ENCODE measurements at regions of chr5 and their contacts with region 1.

Region 1: DNA sequence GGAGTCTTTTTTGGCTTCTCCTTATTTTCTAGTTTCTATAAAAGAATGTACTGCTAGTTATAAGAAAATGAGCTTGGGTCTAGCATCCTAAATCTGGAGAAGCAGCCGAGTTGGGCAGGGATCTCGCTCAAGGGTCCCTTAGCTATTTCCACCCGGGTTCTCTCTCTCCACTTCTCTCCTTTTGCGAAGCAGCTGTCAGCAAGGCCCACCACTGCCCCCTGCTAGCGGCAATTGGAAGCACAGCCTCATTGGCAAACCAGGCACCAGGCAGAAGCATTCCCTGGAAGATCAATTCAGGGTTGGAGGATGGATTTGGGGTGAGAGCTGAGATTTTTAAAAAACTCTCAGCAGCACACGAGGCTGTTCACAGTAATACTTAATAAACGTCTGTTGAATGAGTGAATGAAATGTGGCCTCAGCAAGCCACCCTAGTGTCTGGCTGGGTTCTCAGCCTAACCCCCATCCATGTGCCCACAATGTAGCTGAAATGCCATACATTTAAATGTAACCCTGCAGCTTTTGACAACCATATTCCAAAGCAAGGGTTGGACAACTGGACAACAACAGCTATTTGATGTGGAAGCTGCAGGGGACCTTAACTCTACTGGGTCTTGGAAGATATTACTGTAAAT is 34.6 kb upstream of the TNIP1 start:
- DNase-seq: peak; percentile 70
- ATAC-seq: peak; percentile 80
- H3K4me3 Mint-ChIP-seq: no peak overlapping the region
- H3K27ac Mint-ChIP-seq: peak overlapping the region; percentile 12
- H3K4me1 Mint-ChIP-seq: peaks cover 26% of the 10 kb centered on the region
- H3K27me3 Mint-ChIP-seq: no peaks in the 10 kb centered on the region
- CTCF ChIP-seq: peak; percentile 78

Region 2: GRCh38 chr5:150372639-150373038 is 742.8 kb before region 1 on chr5:
- CTCF ChIA-PET with region 1: no interaction called
- POLR2A ChIA-PET with region 1: no interaction called
- intact Hi-C with region 1: no loop called
- DNase-seq: no peak
- ATAC-seq: no peak
- H3K4me3 Mint-ChIP-seq: no peak overlapping the region
- H3K27ac Mint-ChIP-seq: no peak overlapping the region
- H3K4me1 Mint-ChIP-seq: no peaks in the 10 kb centered on the region
- H3K27me3 Mint-ChIP-seq: no peaks in the 10 kb centered on the region
- CTCF ChIP-seq: no peak

Region 3: GRCh38 chr5:150801117-150801927 is 314.1 kb before region 1 on chr5:
- CTCF ChIA-PET with region 1: interaction called, 16 read pairs
- POLR2A ChIA-PET with region 1: no interaction called
- intact Hi-C with region 1: loop called (anchors 1 kb)
- DNase-seq: no peak
- ATAC-seq: no peak
- H3K4me3 Mint-ChIP-seq: no peak overlapping the region
- H3K27ac Mint-ChIP-seq: no peak overlapping the region
- H3K4me1 Mint-ChIP-seq: no peaks in the 10 kb centered on the region
- H3K27me3 Mint-ChIP-seq: peaks cover 18% of the 10 kb centered on the region
- CTCF ChIP-seq: no peak

Region 4: DNA sequence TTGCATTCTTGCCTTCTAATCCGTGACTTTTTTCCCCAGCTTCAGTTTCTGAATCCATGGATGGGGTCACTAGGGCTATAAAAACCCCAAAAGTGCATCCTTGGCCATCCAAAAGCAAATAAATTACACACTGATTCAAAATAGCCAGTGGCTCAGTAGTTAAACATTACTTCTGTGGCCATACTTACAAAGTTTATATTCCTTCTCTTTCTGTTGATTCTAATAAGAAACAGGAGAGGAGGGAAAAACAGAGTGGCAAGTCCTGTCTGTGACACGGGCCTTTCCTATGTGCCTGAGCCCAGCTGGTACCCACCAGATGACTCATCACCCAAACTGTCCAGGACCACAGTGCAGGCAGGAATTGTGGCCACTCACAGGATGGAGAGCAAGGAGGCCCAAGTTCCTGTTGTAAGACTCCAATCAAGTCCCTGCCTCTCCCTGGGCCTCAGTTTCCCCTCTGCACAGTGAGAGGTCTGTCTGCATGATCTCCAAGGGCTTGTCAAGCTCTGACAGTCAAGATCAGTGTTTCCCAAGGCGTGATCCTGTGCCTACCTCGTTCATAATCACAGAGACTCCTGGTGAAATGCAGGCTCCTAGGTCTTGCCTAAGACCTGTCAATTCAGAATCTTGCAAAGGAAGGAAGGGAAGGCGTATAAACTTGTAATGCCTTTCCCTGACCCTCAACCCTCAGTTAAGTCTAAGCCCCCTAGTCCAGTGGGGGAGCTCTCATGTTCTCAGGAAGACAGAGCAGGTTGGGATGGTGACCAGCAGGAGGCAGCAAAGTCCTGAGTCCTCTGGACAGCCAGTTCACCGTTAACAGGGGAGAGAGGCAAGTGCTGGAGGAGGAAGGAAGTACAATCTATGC is 64.1 kb before region 1 on chr5:
- CTCF ChIA-PET with region 1: interaction called, 625 read pairs
- POLR2A ChIA-PET with region 1: interaction called, 30 read pairs
- intact Hi-C with region 1: loop called (anchors 1 kb)
- DNase-seq: peak; percentile 59
- ATAC-seq: peak; percentile 89
- H3K4me3 Mint-ChIP-seq: no peak overlapping the region
- H3K27ac Mint-ChIP-seq: peak overlapping the region; percentile 76
- H3K4me1 Mint-ChIP-seq: peaks cover 37% of the 10 kb centered on the region
- H3K27me3 Mint-ChIP-seq: no peaks in the 10 kb centered on the region
- CTCF ChIP-seq: peak; percentile 41

Region 5: GRCh38 chr5:151086905-151087360 is 28.5 kb before region 1 on chr5:
- CTCF ChIA-PET with region 1: interaction called, 30 read pairs
- POLR2A ChIA-PET with region 1: interaction called, 9 read pairs
- intact Hi-C with region 1: no loop called
- DNase-seq: peak; percentile 57
- ATAC-seq: peak; percentile 86
- H3K4me3 Mint-ChIP-seq: peak overlapping the region; percentile 83
- H3K27ac Mint-ChIP-seq: peak overlapping the region; percentile 76
- H3K4me1 Mint-ChIP-seq: peaks cover 70% of the 10 kb centered on the region
- H3K27me3 Mint-ChIP-seq: no peaks in the 10 kb centered on the region
- CTCF ChIP-seq: no peak

Region 6: GRCh38 chr5:151141535-151141934 is 26.1 kb after region 1 on chr5:
- CTCF ChIA-PET with region 1: interaction called, 16 read pairs
- POLR2A ChIA-PET with region 1: no interaction called
- intact Hi-C with region 1: no loop called
- DNase-seq: peak; percentile 38
- ATAC-seq: peak; percentile 92
- H3K4me3 Mint-ChIP-seq: peak overlapping the region; percentile 85
- H3K27ac Mint-ChIP-seq: peak overlapping the region; percentile 93
- H3K4me1 Mint-ChIP-seq: peaks cover 85% of the 10 kb centered on the region
- H3K27me3 Mint-ChIP-seq: no peaks in the 10 kb centered on the region
- CTCF ChIP-seq: no peak

Region 7: GRCh38 chr5:151164686-151165392 is 49.4 kb after region 1 on chr5:
- CTCF ChIA-PET with region 1: interaction called, 309 read pairs
- POLR2A ChIA-PET with region 1: interaction called, 5 read pairs
- intact Hi-C with region 1: loop called (anchors 1 kb)
- DNase-seq: peak; percentile 59
- ATAC-seq: peak; percentile 97
- H3K4me3 Mint-ChIP-seq: no peak overlapping the region
- H3K27ac Mint-ChIP-seq: peak overlapping the region; percentile 65
- H3K4me1 Mint-ChIP-seq: peaks cover 39% of the 10 kb centered on the region
- H3K27me3 Mint-ChIP-seq: no peaks in the 10 kb centered on the region
- CTCF ChIP-seq: peak; percentile 72

Region 8: DNA sequence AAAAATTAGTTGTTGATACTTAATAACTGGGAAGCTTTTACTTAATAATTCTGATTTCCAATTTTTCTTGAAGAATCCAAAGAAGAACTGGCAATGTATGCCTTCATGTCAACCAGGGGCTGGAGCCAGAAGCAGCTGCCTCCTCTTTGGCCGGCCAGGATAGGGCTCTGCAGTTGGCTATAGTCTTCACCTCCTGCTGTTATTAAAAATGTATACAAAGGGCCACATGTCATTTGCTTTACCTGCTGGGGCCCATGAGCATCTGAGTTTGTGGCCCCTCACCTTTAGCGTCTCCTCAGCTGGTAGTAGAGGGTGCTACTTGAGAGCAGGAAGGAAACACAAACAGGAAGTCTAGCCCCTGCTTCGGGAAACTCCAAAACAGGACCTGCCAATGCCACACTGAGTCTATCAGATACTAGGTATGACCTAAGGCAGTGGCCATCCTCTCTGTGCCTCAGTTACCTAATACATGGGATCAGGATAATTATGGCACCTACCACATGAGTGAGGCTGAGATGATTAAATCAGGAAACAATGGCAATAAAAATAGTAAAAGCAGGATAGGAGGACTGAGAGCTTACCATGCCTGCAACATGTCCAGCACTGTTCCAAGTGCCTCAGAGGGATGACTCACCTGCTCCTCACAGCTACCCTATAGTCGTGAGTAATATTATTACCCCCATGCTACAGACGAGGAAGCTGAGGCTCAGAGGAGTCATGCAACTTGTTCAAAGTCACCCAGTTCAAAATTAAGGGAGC is 87.2 kb after region 1 on chr5:
- CTCF ChIA-PET with region 1: no interaction called
- POLR2A ChIA-PET with region 1: no interaction called
- intact Hi-C with region 1: no loop called
- DNase-seq: no peak
- ATAC-seq: peak; percentile 77
- H3K4me3 Mint-ChIP-seq: peak overlapping the region; percentile 19
- H3K27ac Mint-ChIP-seq: peak overlapping the region; percentile 56
- H3K4me1 Mint-ChIP-seq: peaks cover 60% of the 10 kb centered on the region
- H3K27me3 Mint-ChIP-seq: no peaks in the 10 kb centered on the region
- CTCF ChIP-seq: no peak

Region 9: DNA sequence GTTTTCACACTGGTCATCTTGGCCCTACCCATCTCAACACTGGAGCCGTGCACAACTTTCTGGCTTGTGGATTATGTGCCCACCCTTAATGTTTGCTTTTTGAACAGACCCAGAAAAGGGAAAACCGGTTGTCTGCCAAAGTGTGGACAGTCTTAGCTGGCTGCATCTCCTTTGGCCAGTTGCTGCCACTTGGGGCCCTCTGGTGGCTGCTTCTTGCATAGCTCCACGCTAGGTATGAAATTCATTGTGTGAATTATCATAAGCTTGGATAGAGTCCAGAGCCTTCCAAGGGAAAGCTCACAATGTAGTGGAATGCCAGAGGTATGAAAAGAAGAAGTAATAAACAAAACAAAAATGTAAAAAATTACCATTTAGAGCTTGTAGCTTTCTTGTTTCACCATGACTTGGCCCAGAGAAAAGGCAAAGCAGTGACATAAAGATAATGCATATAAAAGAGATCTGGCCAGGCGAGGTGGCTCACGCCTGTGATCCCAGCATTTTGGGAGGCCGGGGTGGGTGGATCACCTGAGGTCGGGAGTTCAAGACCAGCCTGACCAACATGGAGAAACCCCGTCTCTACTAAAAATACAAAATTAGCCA is 200.7 kb after region 1 on chr5:
- CTCF ChIA-PET with region 1: interaction called, 15 read pairs
- POLR2A ChIA-PET with region 1: no interaction called
- intact Hi-C with region 1: no loop called
- DNase-seq: peak; percentile 40
- ATAC-seq: peak; percentile 83
- H3K4me3 Mint-ChIP-seq: no peak overlapping the region
- H3K27ac Mint-ChIP-seq: no peak overlapping the region
- H3K4me1 Mint-ChIP-seq: peaks cover 11% of the 10 kb centered on the region
- H3K27me3 Mint-ChIP-seq: peaks cover 5% of the 10 kb centered on the region
- CTCF ChIP-seq: peak; percentile 64